ENCODE measurements at regions of chr4 and their contacts with region 1.

Region 1: GRCh38 chr4:4541661-4542570 is at the start of gene STX18:
- DNase-seq: peak; percentile 90 to 92 (median 92)
- ATAC-seq: peak; percentile 96
- H3K4me3 ChIP-seq: peak within 1 kb of the TSS; percentile 82
- H3K27ac ChIP-seq: peak within 1 kb of the TSS; percentile 74
- H3K4me1 ChIP-seq: peaks cover 7 to 19% of the 10 kb centered on the region in 2 experiments; a peak in 3 of 5 replicates
- H3K27me3 ChIP-seq: no peaks in the 10 kb centered on the region
- CTCF ChIP-seq: no peak
- EP300 ChIP-seq: peak; percentile 63
- POLR2A ChIP-seq: peak; percentile 89
- RAD21 ChIP-seq: no peak
- polyA plus RNA-seq, gene STX18: 6.2 to 6.7 TPM

Region 2: GRCh38 chr4:4356106-4357041 is 185.5 kb before region 1 on chr4:
- CTCF ChIA-PET with region 1: no interaction called
- POLR2A ChIA-PET with region 1: no interaction called
- in situ Hi-C with region 1: no loop called
- intact Hi-C with region 1: no loop called
- DNase-seq: no peak
- ATAC-seq: peak; percentile 57; the same call in 2 of the 3 replicates
- H3K4me3 ChIP-seq: no peak overlapping the region
- H3K27ac ChIP-seq: no peak overlapping the region
- H3K4me1 ChIP-seq: peaks cover 0 to 7% of the 10 kb centered on the region in 2 experiments; a peak in 1 of 5 replicates
- H3K27me3 ChIP-seq: peaks cover 55 to 68% of the 10 kb centered on the region in 2 experiments
- CTCF ChIP-seq: no peak
- EP300 ChIP-seq: no peak
- POLR2A ChIP-seq: no peak
- RAD21 ChIP-seq: no peak

Region 3: GRCh38 chr4:4555916-4556315 is 14.0 kb after region 1 on chr4:
- CTCF ChIA-PET with region 1: no interaction called
- POLR2A ChIA-PET with region 1: interaction called, 18 read pairs
- in situ Hi-C with region 1: no loop called
- intact Hi-C with region 1: no loop called
- DNase-seq: no peak
- ATAC-seq: no peak
- H3K4me3 ChIP-seq: no peak overlapping the region
- H3K27ac ChIP-seq: no peak overlapping the region
- H3K4me1 ChIP-seq: no peaks in the 10 kb centered on the region
- H3K27me3 ChIP-seq: peaks cover 0 to 4% of the 10 kb centered on the region in 2 experiments; a peak in 1 of 5 replicates
- CTCF ChIP-seq: no peak
- EP300 ChIP-seq: no peak
- POLR2A ChIP-seq: no peak
- RAD21 ChIP-seq: no peak

Measured in K562 (cell line).